Ascending aorta (tissue), 2 donors: ENCODE measurements at regions of chr21 and their contacts with region 1.

Region 1: GRCh38 chr21:29298348-29299045 is at the start of gene BACH1:
- DNase-seq: peak; percentile 46 to 92
- H3K4me3 ChIP-seq: peak within 1 kb of the TSS; percentile 91 to 97
- H3K27ac ChIP-seq: peak within 1 kb of the TSS; percentile 88 to 96
- H3K4me1 ChIP-seq: peaks cover 3 to 22% of the 10 kb centered on the region in 2 donors
- H3K27me3 ChIP-seq: no peaks in the 10 kb centered on the region
- CTCF ChIP-seq: peak; percentile 14 to 46 (median 20)
- total RNA-seq, gene BACH1: 12.7 TPM

Region 2: GRCh38 chr21:29002442-29003144 is 295.9 kb before region 1 on chr21:
- intact Hi-C with region 1: loop called (anchors 10 kb)
- DNase-seq: peak; percentile 85 to 97
- H3K4me3 ChIP-seq: peak overlapping the region; percentile 65 to 77
- H3K27ac ChIP-seq: peak overlapping the region; percentile 94 to 97
- H3K4me1 ChIP-seq: peaks cover 0 to 6% of the 10 kb centered on the region in 2 donors
- H3K27me3 ChIP-seq: no peaks in the 10 kb centered on the region
- CTCF ChIP-seq: no peak

Region 3: GRCh38 chr21:29091032-29091431 is 207.5 kb before region 1 on chr21:
- intact Hi-C with region 1: loop called (anchors 5 kb)
- DNase-seq: no peak
- H3K4me3 ChIP-seq: no peak overlapping the region
- H3K27ac ChIP-seq: no peak overlapping the region
- H3K4me1 ChIP-seq: peaks cover 0 to 5% of the 10 kb centered on the region in 2 donors
- H3K27me3 ChIP-seq: no peaks in the 10 kb centered on the region
- CTCF ChIP-seq: no peak

Region 4: GRCh38 chr21:29342363-29342957 is 44.0 kb after region 1 on chr21:
- intact Hi-C with region 1: loop called (anchors 2 kb)
- DNase-seq: peak; percentile 35 to 83
- H3K4me3 ChIP-seq: peak overlapping the region; percentile 18 to 34
- H3K27ac ChIP-seq: peak overlapping the region; percentile 28 to 70
- H3K4me1 ChIP-seq: peaks cover 8 to 39% of the 10 kb centered on the region in 2 donors
- H3K27me3 ChIP-seq: no peaks in the 10 kb centered on the region
- CTCF ChIP-seq: no peak

Region 5: DNA sequence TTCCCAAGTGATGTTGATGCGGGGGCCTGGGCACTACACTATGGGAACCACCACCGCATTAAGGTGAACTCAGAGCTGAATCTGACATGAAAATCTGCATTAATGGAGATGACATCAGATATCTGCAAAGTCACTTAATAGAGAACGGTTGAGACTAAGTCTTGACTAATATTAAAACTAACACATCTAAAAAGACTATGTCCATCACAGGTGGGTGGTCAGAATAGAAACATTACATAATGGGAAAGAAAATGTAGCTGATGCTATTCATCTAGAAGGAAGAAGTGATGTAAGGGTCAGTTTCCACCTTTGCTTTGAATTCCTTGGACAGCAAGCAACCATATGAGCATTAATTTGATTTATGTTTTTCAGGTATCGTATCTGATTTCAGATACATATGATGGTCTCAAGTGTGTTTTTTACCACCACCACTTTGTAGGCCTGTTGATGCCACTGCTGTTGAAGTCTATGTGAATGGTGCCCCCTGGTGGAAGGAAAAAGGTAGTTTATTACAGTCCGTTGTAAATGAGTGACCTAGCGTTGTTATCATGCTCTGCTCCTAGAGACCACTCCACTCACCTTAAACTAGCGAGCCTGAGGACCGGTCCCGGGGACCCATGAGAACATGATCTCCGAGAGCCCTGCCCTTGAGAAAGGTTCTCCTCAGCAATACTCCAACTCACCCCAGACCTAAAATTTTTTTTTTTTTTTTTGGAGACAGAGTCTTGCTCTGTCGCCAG is 73.7 kb after region 1 on chr21:
- intact Hi-C with region 1: loop called (anchors 5 kb)
- DNase-seq: peak in 1 of 2 donors; percentile 76
- H3K4me3 ChIP-seq: no peak overlapping the region
- H3K27ac ChIP-seq: no peak overlapping the region
- H3K4me1 ChIP-seq: no peaks in the 10 kb centered on the region
- H3K27me3 ChIP-seq: no peaks in the 10 kb centered on the region
- CTCF ChIP-seq: peak; percentile 76 to 81 (median 80)

Region 6: GRCh38 chr21:30072496-30072895 is 774.0 kb after region 1 on chr21:
- intact Hi-C with region 1: no loop called
- DNase-seq: no peak
- H3K4me3 ChIP-seq: no peak overlapping the region
- H3K27ac ChIP-seq: no peak overlapping the region
- H3K4me1 ChIP-seq: no peaks in the 10 kb centered on the region
- H3K27me3 ChIP-seq: no peaks in the 10 kb centered on the region
- CTCF ChIP-seq: no peak